Right cardiac atrium (tissue), 5 donors: ENCODE measurements at regions of chr3 and their contacts with region 1.

Region 1: GRCh38 chr3:187651282-187651681 is 18.9 kb downstream of the SST start:
- DNase-seq: no peak
- ATAC-seq: no peak
- H3K4me3 ChIP-seq: no peak overlapping the region
- H3K27ac ChIP-seq: no peak overlapping the region
- H3K4me1 ChIP-seq: no peaks in the 10 kb centered on the region
- H3K27me3 ChIP-seq: no peaks in the 10 kb centered on the region

Region 2: DNA sequence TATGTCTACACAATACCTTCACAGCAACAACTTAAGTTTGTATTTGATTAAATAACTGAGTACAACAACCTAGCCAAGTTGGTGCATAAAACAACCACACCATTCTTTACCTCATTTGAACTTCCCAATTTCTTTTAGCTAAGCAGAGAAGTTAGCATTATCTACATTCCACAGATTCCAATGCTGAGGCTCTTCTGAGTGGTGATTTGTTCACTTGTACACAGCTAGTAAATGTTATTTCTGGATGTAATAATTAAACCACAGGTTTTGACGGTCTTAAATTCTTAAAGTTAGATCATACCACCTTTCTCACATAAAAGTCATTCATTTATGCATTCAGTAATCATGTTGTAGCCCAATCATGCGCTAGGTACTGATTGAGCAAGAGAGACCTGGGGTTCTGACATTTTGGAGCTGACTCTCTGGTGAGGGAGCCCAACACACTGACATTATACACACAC is 83.6 kb before region 1 on chr3:
- intact Hi-C with region 1: loop called in 1 of 4 experiments (anchors 10 kb)
- DNase-seq: no peak
- ATAC-seq: peak; percentile 27 to 45
- H3K4me3 ChIP-seq: no peak overlapping the region
- H3K27ac ChIP-seq: no peak overlapping the region
- H3K4me1 ChIP-seq: peaks cover 6% of the 10 kb centered on the region
- H3K27me3 ChIP-seq: no peaks in the 10 kb centered on the region